PC-9 (cell line): ENCODE measurements at regions of chr16 and their contacts with region 1.

Region 1: GRCh38 chr16:47141773-47142485 is 1.8 kb downstream of the NETO2 start:
- DNase-seq: peak; percentile 83 to 86
- H3K4me3 ChIP-seq: peak overlapping the region; percentile 75
- H3K27ac ChIP-seq: peak overlapping the region; percentile 17; the same call in 1 of the 2 replicates
- H3K4me1 ChIP-seq: peaks cover 25% of the 10 kb centered on the region
- H3K27me3 ChIP-seq: no peaks in the 10 kb centered on the region
- CTCF ChIP-seq: peak; percentile 90

Region 2: DNA sequence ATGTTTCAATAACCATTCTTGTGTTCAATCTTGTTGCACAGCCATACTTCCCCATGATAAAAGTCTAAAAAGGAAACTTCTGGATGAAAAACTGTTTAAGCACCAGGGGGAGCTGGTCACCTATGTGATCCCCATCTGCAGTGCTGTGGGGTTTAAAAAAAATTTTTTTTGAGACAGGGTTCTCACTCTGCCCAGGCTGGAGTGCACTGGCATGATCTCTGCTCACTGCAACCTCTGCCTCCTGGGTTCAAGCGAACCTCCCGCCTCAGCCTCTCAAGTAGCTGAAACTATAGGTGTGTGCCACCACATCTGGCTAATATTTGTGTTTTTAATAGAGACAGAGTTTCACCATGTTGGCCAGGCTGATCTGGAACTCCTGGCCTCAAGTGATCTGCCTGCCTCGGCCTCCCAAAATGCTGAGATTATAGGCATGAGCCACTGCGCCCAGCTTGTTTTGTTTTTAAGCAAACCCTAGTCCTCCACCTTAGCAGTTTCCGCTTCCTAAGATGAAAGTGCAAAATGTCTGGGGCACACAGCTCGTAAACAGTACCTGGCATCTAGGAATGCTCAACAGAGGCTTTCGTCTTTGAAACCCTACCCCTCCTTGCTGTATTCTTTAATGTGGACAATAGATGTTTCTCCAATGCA is 193.9 kb before region 1 on chr16:
- CTCF ChIA-PET with region 1: no interaction called
- POLR2A ChIA-PET with region 1: no interaction called
- intact Hi-C with region 1: loop called (anchors 5 kb)
- DNase-seq: peak; percentile 20 to 41
- H3K4me3 ChIP-seq: no peak overlapping the region
- H3K27ac ChIP-seq: no peak overlapping the region
- H3K4me1 ChIP-seq: no peaks in the 10 kb centered on the region
- H3K27me3 ChIP-seq: no peaks in the 10 kb centered on the region
- CTCF ChIP-seq: peak; percentile 80

Region 3: DNA sequence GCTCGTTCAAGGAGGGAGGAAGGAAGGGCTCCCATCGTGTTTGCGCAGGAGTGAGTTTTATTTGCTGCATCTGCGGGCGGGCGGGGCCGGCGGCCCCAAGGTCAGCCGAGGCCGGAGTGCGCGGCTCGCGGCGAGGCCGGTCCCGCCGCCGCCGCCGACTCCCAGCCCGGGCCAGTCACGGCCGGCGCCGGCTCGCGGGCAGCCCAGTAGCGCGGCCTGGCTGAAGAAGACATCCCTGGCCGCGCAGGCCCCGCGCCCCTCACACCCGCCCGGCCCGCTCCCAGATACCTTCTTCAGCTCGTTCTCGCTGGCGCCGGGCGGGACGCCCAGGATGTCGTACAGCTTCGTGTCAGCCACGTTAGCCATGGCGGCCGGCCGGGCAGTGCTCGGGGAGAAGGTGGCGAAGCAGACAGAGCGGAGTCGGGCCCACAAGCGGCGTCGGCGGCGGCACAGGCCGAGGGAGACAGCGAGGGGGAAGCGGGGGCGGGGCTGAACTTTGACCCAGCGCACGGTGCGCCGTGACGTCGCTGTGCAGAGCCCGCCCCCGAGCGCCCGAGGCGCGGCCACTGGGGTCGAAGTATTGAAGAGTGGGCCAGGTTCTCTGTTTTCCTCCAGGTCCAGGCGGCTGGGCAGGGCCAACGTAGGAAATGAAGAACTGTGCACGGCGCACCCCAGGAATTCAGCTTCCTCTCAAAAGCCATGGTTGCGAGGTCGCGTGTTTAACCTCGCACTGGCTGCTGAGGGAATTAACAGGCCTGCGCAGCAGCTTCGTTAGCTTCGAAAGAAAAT is 168.5 kb before region 1 on chr16 and contains the start of gene DNAJA2:
- CTCF ChIA-PET with region 1: no interaction called
- POLR2A ChIA-PET with region 1: no interaction called
- intact Hi-C with region 1: loop called (anchors 1 kb)
- DNase-seq: peak; percentile 66 to 90
- H3K4me3 ChIP-seq: peak within 1 kb of the TSS; percentile 91
- H3K27ac ChIP-seq: peak within 1 kb of the TSS; percentile 85
- H3K4me1 ChIP-seq: peaks cover 41% of the 10 kb centered on the region
- H3K27me3 ChIP-seq: no peaks in the 10 kb centered on the region
- CTCF ChIP-seq: no peak
- total RNA-seq, gene DNAJA2: 78.9 and 89.8 TPM in 2 replicates

Region 4: DNA sequence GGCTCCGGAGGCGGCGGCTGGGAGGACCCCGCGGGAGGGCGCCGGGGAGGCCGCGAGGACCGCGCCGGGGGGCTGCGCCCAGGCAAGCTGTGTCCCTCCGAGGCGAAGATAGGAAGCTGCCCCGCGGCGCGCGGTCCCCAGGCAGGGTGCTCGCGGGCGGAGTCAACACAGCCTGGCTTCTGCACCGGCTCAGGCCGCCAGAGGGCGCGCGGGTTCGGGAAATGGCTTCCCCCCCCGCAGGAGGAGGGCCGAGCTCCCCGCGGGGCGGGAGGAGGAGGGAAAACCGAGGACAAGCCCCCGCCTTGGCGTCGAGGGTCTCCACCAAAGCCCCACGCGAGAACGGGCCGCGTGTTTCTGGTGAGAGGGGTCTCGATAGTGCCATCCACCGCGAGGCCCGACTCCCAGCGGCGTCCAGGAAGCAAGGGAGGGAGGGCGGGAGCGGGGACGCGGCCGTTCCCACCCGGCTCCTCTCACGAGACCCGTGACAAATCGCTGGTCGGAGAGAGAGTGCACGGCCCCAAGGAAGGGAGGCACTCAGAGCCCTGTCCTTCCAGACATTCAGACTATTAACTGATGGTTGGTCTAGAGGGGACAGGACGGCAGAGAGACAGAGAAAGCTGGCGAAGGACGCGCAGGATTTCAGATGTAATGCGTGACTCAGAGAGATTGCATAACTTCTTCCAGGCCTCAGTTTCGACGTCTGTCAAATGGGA is 104.0 kb before region 1 on chr16:
- CTCF ChIA-PET with region 1: no interaction called
- POLR2A ChIA-PET with region 1: no interaction called
- intact Hi-C with region 1: loop called (anchors 2 kb)
- DNase-seq: peak; percentile 50 to 89
- H3K4me3 ChIP-seq: peak overlapping the region; percentile 71
- H3K27ac ChIP-seq: no peak overlapping the region
- H3K4me1 ChIP-seq: no peaks in the 10 kb centered on the region
- H3K27me3 ChIP-seq: no peaks in the 10 kb centered on the region
- CTCF ChIP-seq: peak; percentile 90

Region 5: GRCh38 chr16:47247690-47248089 is 105.8 kb after region 1 on chr16:
- CTCF ChIA-PET with region 1: no interaction called
- POLR2A ChIA-PET with region 1: no interaction called
- intact Hi-C with region 1: no loop called
- DNase-seq: no peak
- H3K4me3 ChIP-seq: no peak overlapping the region
- H3K27ac ChIP-seq: no peak overlapping the region
- H3K4me1 ChIP-seq: no peaks in the 10 kb centered on the region
- H3K27me3 ChIP-seq: no peaks in the 10 kb centered on the region
- CTCF ChIP-seq: no peak

Region 6: DNA sequence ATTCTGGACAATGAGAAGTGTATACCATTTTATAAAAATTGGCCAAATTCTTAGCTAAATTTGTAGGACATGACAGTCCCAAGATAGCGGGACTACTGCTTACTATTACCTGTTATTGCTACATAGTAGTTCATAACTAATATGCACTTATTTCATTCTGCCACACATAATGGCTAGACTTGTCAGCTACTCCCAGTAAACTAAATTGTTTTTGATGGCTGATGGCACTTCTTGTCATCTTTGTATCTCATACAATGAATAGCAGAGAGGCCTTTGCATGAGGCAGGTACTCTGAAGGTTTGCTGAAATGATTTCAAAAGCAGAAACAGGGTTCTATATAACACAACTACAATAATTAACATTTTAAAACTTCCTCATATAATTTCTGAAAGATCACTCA is 274.9 kb after region 1 on chr16:
- CTCF ChIA-PET with region 1: no interaction called
- POLR2A ChIA-PET with region 1: no interaction called
- intact Hi-C with region 1: no loop called
- DNase-seq: no peak
- H3K4me3 ChIP-seq: no peak overlapping the region
- H3K27ac ChIP-seq: no peak overlapping the region
- H3K4me1 ChIP-seq: no peaks in the 10 kb centered on the region
- H3K27me3 ChIP-seq: no peaks in the 10 kb centered on the region
- CTCF ChIP-seq: no peak

Region 7: DNA sequence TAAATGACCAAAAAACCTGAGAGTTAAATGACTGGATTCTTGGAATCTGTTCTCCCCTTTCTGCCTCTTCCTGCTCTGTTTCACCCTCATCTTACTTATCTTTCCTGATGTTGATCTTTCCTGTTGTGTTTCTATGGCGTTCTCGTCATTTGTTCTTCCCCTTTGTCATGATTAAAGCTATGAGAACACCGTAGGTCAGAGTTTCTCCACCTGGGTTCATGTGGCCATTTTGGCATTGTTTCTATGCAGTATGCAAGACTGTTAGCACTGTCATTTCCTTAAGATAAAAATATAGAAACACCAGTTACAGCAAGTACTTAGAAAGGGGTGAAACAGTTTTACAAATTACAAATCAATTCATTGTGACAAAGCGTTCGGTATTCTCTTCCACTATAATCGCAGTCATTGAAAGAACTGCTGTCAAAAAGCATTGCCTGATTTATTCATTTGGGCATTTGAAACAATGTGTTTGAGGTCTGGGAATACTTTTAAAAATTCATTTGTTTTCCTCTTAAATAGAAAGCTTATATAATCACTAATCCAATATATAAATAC is 485.2 kb after region 1 on chr16:
- CTCF ChIA-PET with region 1: no interaction called
- POLR2A ChIA-PET with region 1: no interaction called
- intact Hi-C with region 1: no loop called
- DNase-seq: no peak
- H3K4me3 ChIP-seq: no peak overlapping the region
- H3K27ac ChIP-seq: no peak overlapping the region
- H3K4me1 ChIP-seq: no peaks in the 10 kb centered on the region
- H3K27me3 ChIP-seq: no peaks in the 10 kb centered on the region
- CTCF ChIP-seq: no peak